ENCODE measurements at regions of chr15 and their contacts with region 1.

Region 1: DNA sequence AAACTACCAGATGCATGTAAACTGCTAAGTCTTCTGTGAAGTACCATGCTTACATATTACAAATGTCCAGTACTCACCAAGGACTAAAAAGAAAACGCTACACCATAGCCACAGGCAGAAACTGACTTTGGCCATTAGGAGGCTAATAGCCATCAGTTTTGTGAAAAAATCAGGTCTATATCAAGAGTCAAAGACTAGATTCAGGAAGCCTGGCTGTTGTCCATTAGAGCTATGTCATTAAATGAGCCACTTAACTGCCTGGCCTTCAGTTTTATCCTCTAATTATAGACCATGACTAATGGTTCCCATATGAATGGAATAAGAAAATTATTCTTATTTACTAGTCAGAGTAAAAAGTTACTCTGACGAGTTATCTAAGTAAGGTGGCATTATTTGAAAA is 144.1 kb downstream of the VPS13C start:
- DNase-seq: no peak
- H3K4me3 ChIP-seq: no peak overlapping the region
- H3K4me3 Mint-ChIP-seq: no peak overlapping the region
- H3K27ac ChIP-seq: no peak overlapping the region
- H3K27ac Mint-ChIP-seq: no peak overlapping the region
- H3K4me1 ChIP-seq: no peaks in the 10 kb centered on the region
- H3K4me1 Mint-ChIP-seq: no peaks in the 10 kb centered on the region
- H3K27me3 ChIP-seq: no peaks in the 10 kb centered on the region
- H3K27me3 Mint-ChIP-seq: no peaks in the 10 kb centered on the region
- CTCF ChIP-seq: no peak

Region 2: GRCh38 chr15:61681038-61681418 is 235.1 kb before region 1 on chr15:
- intact Hi-C with region 1: no loop called
- DNase-seq: peak in 1 of 3 donors; percentile 26
- H3K4me3 ChIP-seq: no peak overlapping the region
- H3K4me3 Mint-ChIP-seq: no peak overlapping the region
- H3K27ac ChIP-seq: no peak overlapping the region
- H3K27ac Mint-ChIP-seq: peak overlapping the region in 1 of 7 donors; percentile 41
- H3K4me1 ChIP-seq: no peaks in the 10 kb centered on the region
- H3K4me1 Mint-ChIP-seq: peaks cover 5% of the 10 kb centered on the region
- H3K27me3 ChIP-seq: no peaks in the 10 kb centered on the region
- H3K27me3 Mint-ChIP-seq: peaks cover 0 to 8% (median 2%) of the 10 kb centered on the region in 3 donors
- CTCF ChIP-seq: no peak

Region 3: DNA sequence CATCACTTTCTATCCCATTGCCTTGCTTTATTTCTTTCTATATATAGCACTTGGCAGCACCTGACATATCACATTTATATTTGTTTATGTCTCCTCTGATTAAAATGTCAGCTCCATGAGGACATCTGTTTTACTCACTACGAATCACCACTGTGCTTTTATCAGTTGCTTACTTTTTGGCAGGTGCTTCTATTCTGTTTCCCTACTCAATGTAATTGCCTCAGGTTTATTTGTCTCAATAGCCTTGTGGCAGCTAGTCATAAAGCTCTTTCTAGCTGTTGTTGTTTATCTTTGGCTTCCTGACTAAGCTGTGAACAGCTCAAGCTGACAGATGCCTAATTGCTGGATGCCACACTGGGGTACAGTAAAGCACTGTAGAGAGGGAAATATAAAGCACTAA is 58.7 kb after region 1 on chr15:
- intact Hi-C with region 1: loop called in 1 of 2 experiments (anchors 10 kb)
- DNase-seq: no peak
- H3K4me3 ChIP-seq: no peak overlapping the region
- H3K4me3 Mint-ChIP-seq: no peak overlapping the region
- H3K27ac ChIP-seq: peak overlapping the region in 1 of 2 donors; percentile 39
- H3K27ac Mint-ChIP-seq: no peak overlapping the region
- H3K4me1 ChIP-seq: no peaks in the 10 kb centered on the region
- H3K4me1 Mint-ChIP-seq: peaks cover 13% of the 10 kb centered on the region
- H3K27me3 ChIP-seq: no peaks in the 10 kb centered on the region
- H3K27me3 Mint-ChIP-seq: no peaks in the 10 kb centered on the region
- CTCF ChIP-seq: no peak

Measured in CD14-positive monocyte (primary cell).